ENCODE measurements at regions of chr11 and their contacts with region 1.

Region 1: DNA sequence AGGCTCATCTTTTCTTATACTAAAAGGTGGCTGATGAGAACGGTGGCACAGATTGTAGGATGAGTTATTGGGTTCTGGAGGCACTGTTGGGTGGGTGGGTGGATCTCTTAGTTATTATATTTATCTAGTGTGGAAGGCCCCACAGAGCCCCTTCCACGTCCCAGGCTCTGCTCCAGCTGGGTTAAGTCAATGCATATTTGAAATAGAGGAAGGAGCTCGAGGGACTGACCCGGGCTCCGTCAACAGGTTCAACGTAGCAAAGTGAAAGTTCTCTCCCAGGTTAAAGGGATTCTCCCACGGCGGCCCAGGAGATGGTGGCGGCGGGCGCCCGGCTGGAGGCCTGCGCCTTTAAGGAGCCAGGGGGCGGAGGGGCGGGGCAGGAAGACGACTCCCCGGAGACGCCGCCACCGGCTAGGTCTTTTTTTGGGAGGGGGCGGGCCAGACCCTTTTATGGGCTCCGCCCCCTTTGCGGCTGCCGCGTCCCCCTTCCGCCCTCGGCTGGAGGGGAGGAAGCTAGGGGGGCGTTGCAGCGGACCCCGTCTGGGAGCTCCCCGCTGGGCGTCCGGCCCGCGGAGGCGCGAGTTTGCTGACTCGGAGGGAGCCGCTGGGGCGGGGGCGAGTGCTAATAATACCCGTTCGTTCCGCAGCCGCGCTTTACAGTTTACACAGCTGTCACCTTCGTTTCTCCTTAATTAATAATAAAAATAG is 1.5 kb upstream of the INPPL1 start:
- DNase-seq: peak; percentile 96
- ATAC-seq: peak; percentile 80
- H3K4me3 Mint-ChIP-seq: peak overlapping the region; percentile 96
- H3K27ac Mint-ChIP-seq: peak overlapping the region; percentile 80
- H3K4me1 Mint-ChIP-seq: peaks cover 16% of the 10 kb centered on the region
- H3K27me3 Mint-ChIP-seq: peaks cover 3% of the 10 kb centered on the region

Region 2: DNA sequence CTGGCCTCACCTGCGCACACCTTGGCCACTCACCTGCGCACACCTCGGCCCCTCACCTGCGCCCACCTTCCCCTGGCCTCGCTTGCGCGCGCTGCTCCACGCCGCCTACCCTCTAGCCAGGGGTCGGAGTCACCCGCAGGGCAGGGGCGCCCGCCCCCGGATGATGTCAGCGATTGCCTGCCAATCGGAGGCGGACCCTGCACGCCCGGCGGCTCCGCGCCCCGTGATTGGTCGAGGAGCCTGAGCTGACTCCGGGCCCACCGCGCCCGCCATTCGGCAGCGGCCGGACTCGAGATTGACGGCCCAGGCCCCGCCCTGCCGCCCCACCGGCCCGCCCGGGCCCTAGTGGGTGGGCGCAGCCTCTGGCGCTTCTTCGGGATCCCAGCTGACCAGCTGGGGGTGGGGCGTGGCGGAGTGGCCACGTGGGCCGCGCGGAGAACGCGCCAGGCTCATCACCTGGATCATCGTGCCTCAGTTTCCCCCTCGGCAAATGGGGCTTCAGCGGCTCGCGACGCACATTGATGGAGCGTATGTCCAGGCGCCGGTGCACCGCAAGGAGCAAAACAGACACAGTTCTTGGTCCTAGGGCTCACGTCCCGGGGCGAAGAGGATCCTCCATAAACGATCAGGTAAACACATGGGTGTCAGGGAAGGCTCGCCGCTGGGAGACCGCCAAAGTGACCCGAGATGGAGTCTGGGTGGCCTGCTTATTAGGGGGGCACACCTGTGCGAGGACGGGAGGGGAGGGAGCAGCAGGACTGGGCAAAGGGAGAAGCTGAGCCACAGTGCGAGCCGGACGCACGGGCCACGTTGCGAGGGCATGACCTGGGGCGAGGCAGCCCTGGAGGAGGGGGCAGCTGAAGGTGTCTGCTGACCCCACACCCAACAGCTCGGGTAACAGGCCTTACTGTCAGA is 774.5 kb before region 1 on chr11 and contains the start of gene DHCR7:
- CTCF ChIA-PET with region 1: no interaction called
- POLR2A ChIA-PET with region 1: no interaction called
- intact Hi-C with region 1: loop called in 1 of 2 experiments (anchors 1 kb)
- DNase-seq: peak; percentile 97
- ATAC-seq: peak; percentile 89
- H3K4me3 Mint-ChIP-seq: peak within 1 kb of the TSS; percentile 88
- H3K27ac Mint-ChIP-seq: peak within 1 kb of the TSS; percentile 90
- H3K4me1 Mint-ChIP-seq: peaks cover 43% of the 10 kb centered on the region
- H3K27me3 Mint-ChIP-seq: no peaks in the 10 kb centered on the region
- total RNA-seq, gene DHCR7: 57.3 to 64.0 TPM

Region 3: GRCh38 chr11:71928737-71929452 is 294.2 kb before region 1 on chr11 and contains the start of gene RNF121:
- CTCF ChIA-PET with region 1: no interaction called
- POLR2A ChIA-PET with region 1: interaction called, 4 read pairs
- intact Hi-C with region 1: loop called in 1 of 2 experiments (anchors 1 kb)
- DNase-seq: peak; percentile 99
- ATAC-seq: peak; percentile 87
- H3K4me3 Mint-ChIP-seq: peak within 1 kb of the TSS; percentile 96
- H3K27ac Mint-ChIP-seq: peak within 1 kb of the TSS; percentile 100
- H3K4me1 Mint-ChIP-seq: peaks cover 50% of the 10 kb centered on the region
- H3K27me3 Mint-ChIP-seq: no peaks in the 10 kb centered on the region
- total RNA-seq, gene RNF121: 28.7 to 29.5 TPM

Region 4: GRCh38 chr11:72102946-72103753 is 119.9 kb before region 1 on chr11 and contains the start of gene LAMTOR1:
- CTCF ChIA-PET with region 1: interaction called, 3 read pairs
- POLR2A ChIA-PET with region 1: no interaction called
- intact Hi-C with region 1: loop called (anchors 1 kb)
- DNase-seq: peak; percentile 99
- ATAC-seq: peak; percentile 98
- H3K4me3 Mint-ChIP-seq: peak within 1 kb of the TSS; percentile 97
- H3K27ac Mint-ChIP-seq: peak within 1 kb of the TSS; percentile 95
- H3K4me1 Mint-ChIP-seq: peaks cover 38% of the 10 kb centered on the region
- H3K27me3 Mint-ChIP-seq: no peaks in the 10 kb centered on the region
- total RNA-seq, gene LAMTOR1: 50.7 to 52.2 TPM

Region 5: GRCh38 chr11:72238040-72238450 is 15.0 kb after region 1 on chr11:
- CTCF ChIA-PET with region 1: interaction called, 10 read pairs
- POLR2A ChIA-PET with region 1: interaction called, 3 read pairs
- intact Hi-C with region 1: loop called in 1 of 2 experiments (anchors 1 kb)
- DNase-seq: peak; percentile 78
- ATAC-seq: peak; percentile 76
- H3K4me3 Mint-ChIP-seq: no peak overlapping the region
- H3K27ac Mint-ChIP-seq: no peak overlapping the region
- H3K4me1 Mint-ChIP-seq: peaks cover 11% of the 10 kb centered on the region
- H3K27me3 Mint-ChIP-seq: peaks cover 32% of the 10 kb centered on the region

Region 6: GRCh38 chr11:73376160-73376802 is 1153.2 kb after region 1 on chr11 and contains the start of gene RELT:
- CTCF ChIA-PET with region 1: no interaction called
- POLR2A ChIA-PET with region 1: no interaction called
- intact Hi-C with region 1: loop called in 1 of 2 experiments (anchors 2 kb)
- DNase-seq: peak; percentile 96
- ATAC-seq: peak; percentile 94
- H3K4me3 Mint-ChIP-seq: peak within 1 kb of the TSS; percentile 92
- H3K27ac Mint-ChIP-seq: peak within 1 kb of the TSS; percentile 93
- H3K4me1 Mint-ChIP-seq: peaks cover 33% of the 10 kb centered on the region
- H3K27me3 Mint-ChIP-seq: no peaks in the 10 kb centered on the region
- total RNA-seq, gene RELT: 18.5 to 21.3 TPM